MCF 10A (cell line): ENCODE measurements at regions of chr17 and their contacts with region 1.

Region 1: GRCh38 chr17:48505787-48506645 is 24.8 kb downstream of the HOXB1 start:
- DNase-seq: peak; percentile 76
- H3K4me3 Mint-ChIP-seq: no peak overlapping the region
- H3K27ac Mint-ChIP-seq: no peak overlapping the region
- H3K4me1 Mint-ChIP-seq: peaks cover 8% of the 10 kb centered on the region
- H3K27me3 Mint-ChIP-seq: no peaks in the 10 kb centered on the region
- CTCF ChIP-seq: no peak

Region 2: GRCh38 chr17:48492401-48493298 is 13.4 kb before region 1 on chr17:
- CTCF ChIA-PET with region 1: interaction called, 23 read pairs
- POLR2A ChIA-PET with region 1: interaction called, 4 read pairs
- intact Hi-C with region 1: no loop called
- DNase-seq: peak; percentile 43
- H3K4me3 Mint-ChIP-seq: no peak overlapping the region
- H3K27ac Mint-ChIP-seq: no peak overlapping the region
- H3K4me1 Mint-ChIP-seq: peaks cover 9% of the 10 kb centered on the region
- H3K27me3 Mint-ChIP-seq: no peaks in the 10 kb centered on the region
- CTCF ChIP-seq: peak; percentile 86